ENCODE measurements at regions of chr11 and their contacts with region 1.

Region 1: GRCh38 chr11:44556735-44557409 is 8.6 kb upstream of the CD82 start:
- DNase-seq: peak in 1 of 2 donors; percentile 75
- ATAC-seq: peak; percentile 83

Region 2: DNA sequence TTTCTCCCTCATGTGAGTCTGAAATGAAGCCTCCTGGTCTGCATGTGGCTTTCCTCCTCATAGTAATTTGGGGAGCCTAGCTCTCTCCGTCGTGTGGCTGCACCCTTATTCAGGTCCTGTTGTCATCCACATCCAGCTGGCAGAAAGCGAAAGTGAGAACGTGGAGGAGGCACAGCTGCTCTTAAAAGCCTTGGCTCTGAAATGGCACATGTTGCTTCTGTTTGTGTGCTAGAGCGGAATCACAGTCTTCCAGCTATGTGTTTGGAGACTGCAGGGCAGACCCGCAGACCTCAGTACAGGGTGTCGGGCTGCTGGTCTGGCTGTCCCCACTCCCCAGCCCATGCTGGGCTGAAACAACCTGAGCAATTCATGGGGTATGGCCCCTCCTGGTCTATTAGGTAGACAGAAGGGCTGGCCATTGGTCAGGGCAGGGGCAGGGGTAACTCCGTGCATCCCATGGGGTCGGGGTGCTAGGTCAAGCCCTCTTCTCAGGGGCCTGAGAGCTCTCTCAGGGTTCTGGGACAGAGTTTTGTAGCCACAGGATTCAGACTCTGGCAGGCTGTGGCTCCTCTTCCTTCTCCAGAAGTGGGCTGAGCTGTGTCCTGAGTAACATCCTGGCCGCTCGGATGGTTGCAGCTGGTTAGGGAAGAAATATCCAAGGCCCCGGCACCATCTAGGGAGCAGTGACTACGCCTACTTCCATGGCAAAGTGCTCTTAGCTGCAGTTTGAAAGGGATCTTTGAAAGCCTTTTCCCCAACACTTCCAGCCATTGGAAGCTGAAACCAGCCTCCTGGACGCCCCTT is 563.8 kb before region 1 on chr11:
- intact Hi-C with region 1: no loop called
- DNase-seq: no peak
- ATAC-seq: no peak

Region 3: DNA sequence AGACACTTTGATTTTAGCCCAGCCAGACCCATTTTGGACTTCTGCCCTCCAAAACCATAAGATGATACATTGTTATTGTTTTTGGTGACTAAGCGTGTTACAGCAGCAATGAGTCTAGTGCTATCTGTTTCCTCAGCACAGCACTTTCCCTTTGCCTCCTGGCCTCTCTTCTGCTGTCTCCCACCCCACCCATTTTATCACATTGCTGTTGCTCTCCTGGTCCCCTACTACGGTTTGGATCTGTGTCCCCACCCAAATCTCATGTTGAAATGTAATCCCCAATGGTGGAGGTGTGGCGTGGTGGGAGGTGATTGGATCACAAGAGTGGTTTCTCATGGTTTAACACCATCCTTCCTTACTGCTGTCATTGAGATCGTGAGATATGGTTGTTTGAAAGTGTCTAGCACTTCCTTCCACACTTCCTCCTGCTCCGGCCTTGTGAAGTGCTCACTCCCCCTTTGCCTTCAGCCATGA is 51.3 kb before region 1 on chr11:
- intact Hi-C with region 1: no loop called
- DNase-seq: no peak
- ATAC-seq: no peak

Region 4: GRCh38 chr11:44615913-44616791 is 59.3 kb after region 1 on chr11:
- intact Hi-C with region 1: loop called (anchors 1 to 5 kb)
- DNase-seq: peak; percentile 5 to 7
- ATAC-seq: no peak

Region 5: DNA sequence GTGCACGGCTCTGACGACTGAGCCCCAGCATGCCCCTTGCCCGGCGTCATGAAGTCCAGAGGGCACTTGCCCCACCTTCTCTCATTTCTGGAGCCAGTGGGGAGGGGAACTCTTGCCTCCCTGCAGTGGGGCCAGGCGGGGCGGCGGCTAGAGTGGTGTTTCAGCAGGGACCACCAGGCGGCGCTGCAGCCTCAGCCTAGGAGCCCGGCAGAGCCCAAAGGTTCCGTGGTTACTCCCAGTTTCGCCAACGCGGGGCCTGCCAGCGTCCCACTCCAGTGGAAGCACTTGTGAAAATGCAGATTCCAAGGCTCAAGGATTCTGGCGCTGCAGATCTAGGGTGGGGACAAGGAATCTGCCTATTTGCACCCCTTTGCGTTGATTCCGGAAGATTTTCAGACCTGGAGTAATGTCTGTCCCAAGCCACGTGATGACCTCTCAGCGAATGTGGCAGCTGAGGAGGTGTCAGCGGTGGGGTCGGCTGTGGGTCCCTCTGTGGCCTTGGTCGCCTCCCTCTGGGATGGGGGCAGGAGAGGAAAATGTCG is 64.3 kb after region 1 on chr11:
- intact Hi-C with region 1: loop called in 1 of 2 experiments (anchors 5 kb)
- DNase-seq: peak; percentile 51 to 76
- ATAC-seq: peak; percentile 83

Region 6: GRCh38 chr11:44899959-44900358 is 343.1 kb after region 1 on chr11:
- intact Hi-C with region 1: loop called in 1 of 2 experiments (anchors 5 kb)
- DNase-seq: no peak
- ATAC-seq: peak; percentile 34